ENCODE measurements at regions of chr12 and their contacts with region 1.

Region 1: GRCh38 chr12:132153501-132154340 is 9.5 kb downstream of the NOC4L start:
- DNase-seq: peak; percentile 53
- H3K4me3 ChIP-seq: no peak overlapping the region
- H3K27ac ChIP-seq: no peak overlapping the region
- H3K4me1 ChIP-seq: no peaks in the 10 kb centered on the region
- H3K27me3 ChIP-seq: no peaks in the 10 kb centered on the region
- CTCF ChIP-seq: peak; percentile 89 to 98
- POLR2A ChIP-seq: no peak

Region 2: GRCh38 chr12:131473741-131474709 is 679.7 kb before region 1 on chr12:
- CTCF ChIA-PET with region 1: no interaction called
- POLR2A ChIA-PET with region 1: no interaction called
- dilution Hi-C with region 1: no loop called
- intact Hi-C with region 1: no loop called
- DNase-seq: no peak
- H3K4me3 ChIP-seq: no peak overlapping the region
- H3K27ac ChIP-seq: no peak overlapping the region
- H3K4me1 ChIP-seq: no peaks in the 10 kb centered on the region
- H3K27me3 ChIP-seq: no peaks in the 10 kb centered on the region
- CTCF ChIP-seq: no peak
- POLR2A ChIP-seq: no peak

Region 3: DNA sequence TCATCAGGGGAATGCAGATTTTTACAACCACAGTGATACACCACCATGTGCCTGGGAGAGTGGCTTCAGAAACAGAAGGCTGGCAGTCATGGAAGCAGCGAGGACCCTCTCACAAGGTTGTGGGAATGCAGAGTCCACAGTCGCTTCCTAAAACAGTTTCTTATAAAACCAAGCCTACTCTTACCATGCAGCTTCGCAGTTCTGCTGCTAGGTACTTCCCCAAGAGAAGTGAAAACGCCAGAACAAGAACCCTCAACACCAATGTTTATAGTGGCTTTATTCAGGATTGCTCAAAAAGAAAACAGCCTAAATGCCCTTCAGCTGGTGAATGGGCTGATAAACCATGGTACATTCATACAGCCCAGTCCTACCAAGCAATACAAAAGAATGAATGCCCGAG is 96.8 kb before region 1 on chr12:
- CTCF ChIA-PET with region 1: no interaction called
- POLR2A ChIA-PET with region 1: no interaction called
- dilution Hi-C with region 1: no loop called
- intact Hi-C with region 1: no loop called
- DNase-seq: no peak
- H3K4me3 ChIP-seq: no peak overlapping the region
- H3K27ac ChIP-seq: no peak overlapping the region
- H3K4me1 ChIP-seq: no peaks in the 10 kb centered on the region
- H3K27me3 ChIP-seq: no peaks in the 10 kb centered on the region
- CTCF ChIP-seq: no peak
- POLR2A ChIP-seq: no peak

Region 4: GRCh38 chr12:132167611-132168310 is 14.0 kb after region 1 on chr12:
- CTCF ChIA-PET with region 1: interaction called, 11 read pairs
- POLR2A ChIA-PET with region 1: no interaction called
- dilution Hi-C with region 1: no loop called
- intact Hi-C with region 1: no loop called
- DNase-seq: no peak
- H3K4me3 ChIP-seq: no peak overlapping the region
- H3K27ac ChIP-seq: no peak overlapping the region
- H3K4me1 ChIP-seq: no peaks in the 10 kb centered on the region
- H3K27me3 ChIP-seq: peaks cover 0 to 2% of the 10 kb centered on the region in 2 experiments
- CTCF ChIP-seq: no peak
- POLR2A ChIP-seq: no peak

Region 5: GRCh38 chr12:132218915-132219314 is 65.2 kb after region 1 on chr12:
- CTCF ChIA-PET with region 1: interaction called, 52 read pairs
- POLR2A ChIA-PET with region 1: no interaction called
- dilution Hi-C with region 1: no loop called
- intact Hi-C with region 1: loop called (anchors 1 kb)
- DNase-seq: peak; percentile 19
- H3K4me3 ChIP-seq: no peak overlapping the region
- H3K27ac ChIP-seq: no peak overlapping the region
- H3K4me1 ChIP-seq: no peaks in the 10 kb centered on the region
- H3K27me3 ChIP-seq: no peaks in the 10 kb centered on the region
- CTCF ChIP-seq: peak in 1 of 2 donors; percentile 32
- POLR2A ChIP-seq: no peak

Region 6: GRCh38 chr12:133106253-133106652 is 952.5 kb after region 1 on chr12:
- CTCF ChIA-PET with region 1: no interaction called
- POLR2A ChIA-PET with region 1: no interaction called
- dilution Hi-C with region 1: no loop called
- intact Hi-C with region 1: no loop called
- DNase-seq: peak; percentile 18
- H3K4me3 ChIP-seq: no peak overlapping the region
- H3K27ac ChIP-seq: no peak overlapping the region
- H3K4me1 ChIP-seq: no peaks in the 10 kb centered on the region
- H3K27me3 ChIP-seq: no peaks in the 10 kb centered on the region
- CTCF ChIP-seq: no peak
- POLR2A ChIP-seq: no peak